Right cardiac atrium (tissue), 5 donors: ENCODE measurements at regions of chr2 and their contacts with region 1.

Region 1: GRCh38 chr2:39431592-39432316 is 5.3 kb downstream of the MAP4K3 start:
- DNase-seq: no peak
- ATAC-seq: peak; percentile 50 to 57
- H3K4me3 ChIP-seq: no peak overlapping the region
- H3K27ac ChIP-seq: peak overlapping the region; percentile 42
- H3K4me1 ChIP-seq: peaks cover 4% of the 10 kb centered on the region
- H3K27me3 ChIP-seq: no peaks in the 10 kb centered on the region

Region 2: GRCh38 chr2:38540580-38541286 is 891.0 kb before region 1 on chr2:
- intact Hi-C with region 1: no loop called
- DNase-seq: peak in 1 of 3 donors; percentile 62
- ATAC-seq: no peak
- H3K4me3 ChIP-seq: no peak overlapping the region
- H3K27ac ChIP-seq: no peak overlapping the region
- H3K4me1 ChIP-seq: no peaks in the 10 kb centered on the region
- H3K27me3 ChIP-seq: no peaks in the 10 kb centered on the region

Region 3: GRCh38 chr2:39385172-39385571 is 46.6 kb before region 1 on chr2:
- intact Hi-C with region 1: loop called in 2 of 4 experiments (anchors 5 kb)
- DNase-seq: no peak
- ATAC-seq: no peak
- H3K4me3 ChIP-seq: no peak overlapping the region
- H3K27ac ChIP-seq: no peak overlapping the region
- H3K4me1 ChIP-seq: peaks cover 8% of the 10 kb centered on the region
- H3K27me3 ChIP-seq: no peaks in the 10 kb centered on the region